GM12878 (cell line): ENCODE measurements at regions of chr16 and their contacts with region 1.

Region 1: GRCh38 chr16:4253394-4254150 is 11.7 kb upstream of the SRL start:
- DNase-seq: peak; percentile 88
- ATAC-seq: peak; percentile 98
- H3K4me3 ChIP-seq: peak overlapping the region; percentile 56
- H3K27ac ChIP-seq: peak overlapping the region; percentile 82
- H3K4me1 ChIP-seq: no peaks in the 10 kb centered on the region
- H3K27me3 ChIP-seq: no peaks in the 10 kb centered on the region
- CTCF ChIP-seq: no peak
- EP300 ChIP-seq: 0 out of 4 replicates have a peak, but pooled peaks of 1 of the 2 experiments have one; percentile 6
- POLR2A ChIP-seq: peak; percentile 95
- RAD21 ChIP-seq: peak; percentile 80

Region 2: GRCh38 chr16:3879887-3880564 is 373.5 kb before region 1 on chr16:
- CTCF ChIA-PET with region 1: interaction called, 7 read pairs
- POLR2A ChIA-PET with region 1: no interaction called
- RAD21 ChIA-PET with region 1: interaction called, 6 read pairs
- SMC1A ChIA-PET with region 1: no interaction called
- in situ Hi-C with region 1: no loop called
- intact Hi-C with region 1: loop called (anchors 5 kb)
- DNase-seq: no peak
- ATAC-seq: peak; percentile 71
- H3K4me3 ChIP-seq: peak overlapping the region; percentile 80
- H3K27ac ChIP-seq: peak overlapping the region; percentile 60
- H3K4me1 ChIP-seq: peaks cover 11% of the 10 kb centered on the region
- H3K27me3 ChIP-seq: no peaks in the 10 kb centered on the region
- CTCF ChIP-seq: peak in 2 of 3 experiments; percentile 7 to 43; a peak in 2 of 6 replicates
- EP300 ChIP-seq: no peak
- POLR2A ChIP-seq: peak; percentile 24; the same call in 1 of the 2 replicates
- RAD21 ChIP-seq: 0 out of 2 replicates have a peak, but pooled peaks have one; percentile 24

Region 3: DNA sequence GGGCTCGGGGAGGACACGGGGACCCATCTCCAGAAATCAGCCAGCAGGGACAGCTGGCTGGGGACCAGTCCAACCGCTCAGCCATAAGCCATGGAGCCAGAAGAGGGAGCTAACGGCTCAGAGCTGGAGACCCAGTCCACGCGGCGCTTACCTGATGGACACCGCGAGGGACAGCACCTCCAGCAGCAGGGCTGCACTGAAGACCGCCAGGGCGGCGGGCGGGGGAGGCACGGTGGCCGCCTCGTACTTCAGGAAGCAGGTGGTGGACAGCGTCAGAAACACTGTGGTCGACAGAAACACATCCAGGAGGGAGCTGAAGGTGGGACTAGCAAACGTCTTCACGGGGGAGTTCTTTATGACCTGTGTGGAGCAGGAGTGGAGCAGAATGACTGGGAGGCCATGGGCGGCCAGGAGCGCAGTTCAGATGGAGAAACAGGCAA is 270.5 kb before region 1 on chr16:
- CTCF ChIA-PET with region 1: interaction called, 15 read pairs
- POLR2A ChIA-PET with region 1: no interaction called
- RAD21 ChIA-PET with region 1: interaction called, 18 read pairs
- SMC1A ChIA-PET with region 1: interaction called, 3 read pairs
- in situ Hi-C with region 1: no loop called
- intact Hi-C with region 1: no loop called
- DNase-seq: no peak
- ATAC-seq: peak; percentile 85
- H3K4me3 ChIP-seq: no peak overlapping the region
- H3K27ac ChIP-seq: no peak overlapping the region
- H3K4me1 ChIP-seq: no peaks in the 10 kb centered on the region
- H3K27me3 ChIP-seq: no peaks in the 10 kb centered on the region
- CTCF ChIP-seq: peak; percentile 41 to 67 (median 56)
- EP300 ChIP-seq: no peak
- POLR2A ChIP-seq: no peak
- RAD21 ChIP-seq: peak; percentile 50

Region 4: DNA sequence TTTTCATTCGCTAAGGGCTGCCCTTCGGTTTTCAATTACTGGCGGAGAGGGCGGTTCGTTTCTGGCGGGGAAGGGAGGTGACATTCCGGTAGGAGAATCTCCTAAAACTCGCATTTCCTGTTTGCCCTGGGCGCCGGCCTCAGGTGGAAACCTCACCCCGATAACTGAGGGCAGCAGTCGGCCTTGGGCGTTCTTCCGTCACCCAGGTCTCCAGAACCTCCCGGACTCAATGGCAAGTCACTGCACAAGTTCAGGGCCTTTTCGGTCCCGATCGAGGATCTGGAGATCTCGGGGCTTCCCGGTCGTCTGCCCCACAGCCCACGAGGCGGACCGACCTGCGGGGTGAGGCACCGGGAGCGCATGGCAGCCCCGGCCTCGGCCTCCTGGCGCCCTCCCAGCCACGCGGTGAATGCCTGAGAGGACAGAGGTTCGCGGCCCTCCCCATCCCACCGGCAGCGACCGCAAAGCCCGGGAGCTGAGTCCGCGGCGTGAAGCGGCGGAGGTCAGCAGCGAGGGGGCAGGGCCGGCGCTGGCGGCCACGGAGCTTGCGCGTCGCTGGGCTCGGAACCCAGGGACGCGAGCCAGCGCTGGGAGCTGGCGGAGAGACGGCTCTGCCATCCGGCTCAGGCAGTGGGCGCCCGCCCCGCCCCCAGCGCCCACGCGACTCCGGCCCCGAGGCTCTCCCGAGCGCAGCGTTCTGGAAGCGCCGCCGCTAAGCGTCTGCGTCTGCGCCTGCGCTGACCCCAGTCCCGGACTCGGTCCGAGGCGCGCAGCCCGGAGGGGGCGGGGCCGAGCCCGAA is 70.1 kb before region 1 on chr16:
- CTCF ChIA-PET with region 1: interaction called, 12 read pairs
- POLR2A ChIA-PET with region 1: no interaction called
- RAD21 ChIA-PET with region 1: interaction called, 7 read pairs
- SMC1A ChIA-PET with region 1: no interaction called
- in situ Hi-C with region 1: no loop called
- intact Hi-C with region 1: loop called (anchors 5 kb)
- DNase-seq: peak; percentile 56
- ATAC-seq: peak; percentile 96
- H3K4me3 ChIP-seq: peak overlapping the region; percentile 58
- H3K27ac ChIP-seq: peak overlapping the region; percentile 54
- H3K4me1 ChIP-seq: peaks cover 3% of the 10 kb centered on the region; the same call in 1 of the 2 replicates
- H3K27me3 ChIP-seq: peaks cover 0 to 2% of the 10 kb centered on the region in 2 experiments; a peak in 1 of 4 replicates
- CTCF ChIP-seq: no peak
- EP300 ChIP-seq: no peak; a peak in 1 of 4 replicates
- POLR2A ChIP-seq: peak; percentile 86
- RAD21 ChIP-seq: no peak

Region 5: GRCh38 chr16:4266372-4266771 is 12.8 kb after region 1 on chr16:
- CTCF ChIA-PET with region 1: interaction called, 42 read pairs
- POLR2A ChIA-PET with region 1: interaction called, 12 read pairs
- RAD21 ChIA-PET with region 1: interaction called, 6 read pairs
- SMC1A ChIA-PET with region 1: interaction called, 6 read pairs
- in situ Hi-C with region 1: no loop called
- intact Hi-C with region 1: no loop called
- DNase-seq: no peak
- ATAC-seq: no peak
- H3K4me3 ChIP-seq: no peak overlapping the region
- H3K27ac ChIP-seq: no peak overlapping the region
- H3K4me1 ChIP-seq: no peaks in the 10 kb centered on the region; the same call in 1 of the 2 replicates
- H3K27me3 ChIP-seq: no peaks in the 10 kb centered on the region
- CTCF ChIP-seq: no peak
- EP300 ChIP-seq: no peak
- POLR2A ChIP-seq: no peak
- RAD21 ChIP-seq: no peak

Region 6: GRCh38 chr16:4307215-4308037 is 53.9 kb after region 1 on chr16:
- CTCF ChIA-PET with region 1: interaction called, 14 read pairs
- POLR2A ChIA-PET with region 1: interaction called, 7 read pairs
- RAD21 ChIA-PET with region 1: interaction called, 8 read pairs
- SMC1A ChIA-PET with region 1: interaction called, 3 read pairs
- in situ Hi-C with region 1: no loop called
- intact Hi-C with region 1: no loop called
- DNase-seq: peak; percentile 72
- ATAC-seq: peak; percentile 92
- H3K4me3 ChIP-seq: peak overlapping the region; percentile 94
- H3K27ac ChIP-seq: peak overlapping the region; percentile 87
- H3K4me1 ChIP-seq: peaks cover 13% of the 10 kb centered on the region
- H3K27me3 ChIP-seq: no peaks in the 10 kb centered on the region
- CTCF ChIP-seq: no peak
- EP300 ChIP-seq: no peak
- POLR2A ChIP-seq: peak; percentile 84
- RAD21 ChIP-seq: no peak